GM12878 (cell line): ENCODE measurements at regions of chr5 and their contacts with region 1.

Region 1: DNA sequence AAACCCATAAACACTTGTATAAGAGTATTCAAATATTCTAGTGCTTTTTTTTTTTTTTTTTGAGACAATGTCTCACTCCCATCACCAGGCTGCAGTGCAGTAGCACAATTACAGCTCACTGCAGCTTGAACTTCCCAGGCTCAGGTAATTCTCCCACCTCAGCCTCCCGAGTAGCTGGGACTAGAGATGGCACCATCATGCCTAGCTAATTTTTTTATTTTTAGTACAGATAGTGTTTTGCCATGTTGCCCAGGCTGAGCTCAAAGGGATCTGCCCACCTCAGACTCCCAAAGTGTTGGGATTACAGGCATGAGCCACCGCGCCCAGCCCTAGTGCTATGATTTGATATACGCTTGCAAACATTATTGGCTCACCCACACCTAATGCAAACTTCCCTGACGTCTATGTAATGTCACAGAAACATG is 11.8 kb downstream of the IL6ST start:
- DNase-seq: no peak
- ATAC-seq: peak; percentile 28
- H3K4me3 ChIP-seq: no peak overlapping the region
- H3K27ac ChIP-seq: no peak overlapping the region
- H3K4me1 ChIP-seq: peaks cover 1% of the 10 kb centered on the region
- H3K27me3 ChIP-seq: no peaks in the 10 kb centered on the region
- CTCF ChIP-seq: peak in 2 of 3 experiments; percentile 14 to 50; a peak in 3 of 6 replicates
- EP300 ChIP-seq: no peak
- POLR2A ChIP-seq: no peak
- RAD21 ChIP-seq: peak; percentile 38

Region 2: GRCh38 chr5:56070851-56071465 is 88.0 kb after region 1 on chr5:
- CTCF ChIA-PET with region 1: interaction called, 5 read pairs
- POLR2A ChIA-PET with region 1: no interaction called
- RAD21 ChIA-PET with region 1: interaction called, 7 read pairs
- SMC1A ChIA-PET with region 1: interaction called, 62 read pairs
- in situ Hi-C with region 1: no loop called
- intact Hi-C with region 1: no loop called
- DNase-seq: no peak
- ATAC-seq: peak; percentile 69
- H3K4me3 ChIP-seq: no peak overlapping the region
- H3K27ac ChIP-seq: no peak overlapping the region
- H3K4me1 ChIP-seq: peaks cover 6% of the 10 kb centered on the region
- H3K27me3 ChIP-seq: no peaks in the 10 kb centered on the region
- CTCF ChIP-seq: no peak
- EP300 ChIP-seq: no peak
- POLR2A ChIP-seq: no peak
- RAD21 ChIP-seq: no peak